ENCODE measurements at regions of chr17 and their contacts with region 1.

Region 1: DNA sequence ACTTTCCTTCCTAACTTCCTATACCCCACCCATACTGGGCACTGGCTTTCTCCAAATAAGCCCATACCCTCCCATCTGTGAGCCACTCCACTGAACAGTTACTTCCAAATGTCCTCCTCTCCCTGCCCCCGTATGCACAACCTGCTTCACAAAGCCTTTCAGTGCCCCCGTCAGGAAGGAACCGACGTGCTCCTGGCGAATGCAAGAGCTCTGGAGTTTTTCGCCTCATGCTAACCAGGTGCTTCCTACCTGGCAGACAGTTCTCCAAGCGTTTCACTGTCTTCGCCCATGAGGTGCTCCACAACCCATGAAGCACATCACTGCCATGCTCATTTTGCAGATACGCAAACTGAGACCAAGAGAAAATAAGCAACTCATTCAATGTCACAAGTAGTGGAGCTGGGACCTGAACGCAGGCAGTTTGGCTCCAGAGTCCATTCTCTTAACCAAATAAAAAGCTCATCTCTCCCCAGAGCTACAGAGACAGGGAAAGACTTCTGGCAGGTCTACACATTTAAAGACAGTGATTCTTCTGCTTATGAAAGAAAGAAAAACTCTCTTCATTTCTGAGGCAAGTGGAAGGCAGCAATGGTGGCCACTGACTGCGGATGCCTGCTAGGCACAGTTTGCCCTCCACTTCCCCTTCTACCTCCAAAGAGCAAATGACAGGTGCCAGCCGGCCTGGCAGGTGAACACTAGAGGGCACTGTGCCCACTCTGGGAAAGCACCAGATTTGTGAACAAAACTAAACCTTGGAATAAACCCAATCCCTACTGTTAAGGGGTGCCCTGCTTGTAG is 23.8 kb downstream of the SPHK1 start:
- DNase-seq: peak; percentile 81
- ATAC-seq: peak; percentile 81
- H3K4me3 Mint-ChIP-seq: no peak overlapping the region
- H3K27ac Mint-ChIP-seq: no peak overlapping the region
- H3K4me1 Mint-ChIP-seq: peaks cover 8% of the 10 kb centered on the region
- H3K27me3 Mint-ChIP-seq: no peaks in the 10 kb centered on the region
- CTCF ChIP-seq: peak; percentile 88

Region 2: DNA sequence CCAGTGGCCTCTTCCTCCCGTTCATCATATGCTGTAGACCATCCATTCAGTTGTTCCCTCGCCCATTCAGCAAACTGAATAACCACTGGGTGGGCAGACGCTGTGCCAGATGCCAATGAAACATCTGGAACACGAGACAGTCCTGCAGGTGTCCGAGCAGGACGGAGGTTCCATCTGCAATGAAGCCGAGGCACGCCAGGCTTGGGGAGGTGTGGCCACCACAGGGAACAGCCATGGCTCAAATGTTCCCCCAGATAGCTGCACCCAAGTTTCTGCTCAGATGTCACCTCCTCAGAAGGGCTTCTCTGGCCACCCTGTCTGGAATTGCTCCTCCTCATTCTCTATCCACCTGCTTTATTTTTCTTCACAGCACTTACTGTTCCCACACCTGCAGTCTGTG is 14.2 kb after region 1 on chr17:
- CTCF ChIA-PET with region 1: interaction called, 15 read pairs
- POLR2A ChIA-PET with region 1: no interaction called
- intact Hi-C with region 1: no loop called
- DNase-seq: no peak
- ATAC-seq: no peak
- H3K4me3 Mint-ChIP-seq: no peak overlapping the region
- H3K27ac Mint-ChIP-seq: no peak overlapping the region
- H3K4me1 Mint-ChIP-seq: peaks cover 13% of the 10 kb centered on the region
- H3K27me3 Mint-ChIP-seq: no peaks in the 10 kb centered on the region
- CTCF ChIP-seq: no peak

Region 3: DNA sequence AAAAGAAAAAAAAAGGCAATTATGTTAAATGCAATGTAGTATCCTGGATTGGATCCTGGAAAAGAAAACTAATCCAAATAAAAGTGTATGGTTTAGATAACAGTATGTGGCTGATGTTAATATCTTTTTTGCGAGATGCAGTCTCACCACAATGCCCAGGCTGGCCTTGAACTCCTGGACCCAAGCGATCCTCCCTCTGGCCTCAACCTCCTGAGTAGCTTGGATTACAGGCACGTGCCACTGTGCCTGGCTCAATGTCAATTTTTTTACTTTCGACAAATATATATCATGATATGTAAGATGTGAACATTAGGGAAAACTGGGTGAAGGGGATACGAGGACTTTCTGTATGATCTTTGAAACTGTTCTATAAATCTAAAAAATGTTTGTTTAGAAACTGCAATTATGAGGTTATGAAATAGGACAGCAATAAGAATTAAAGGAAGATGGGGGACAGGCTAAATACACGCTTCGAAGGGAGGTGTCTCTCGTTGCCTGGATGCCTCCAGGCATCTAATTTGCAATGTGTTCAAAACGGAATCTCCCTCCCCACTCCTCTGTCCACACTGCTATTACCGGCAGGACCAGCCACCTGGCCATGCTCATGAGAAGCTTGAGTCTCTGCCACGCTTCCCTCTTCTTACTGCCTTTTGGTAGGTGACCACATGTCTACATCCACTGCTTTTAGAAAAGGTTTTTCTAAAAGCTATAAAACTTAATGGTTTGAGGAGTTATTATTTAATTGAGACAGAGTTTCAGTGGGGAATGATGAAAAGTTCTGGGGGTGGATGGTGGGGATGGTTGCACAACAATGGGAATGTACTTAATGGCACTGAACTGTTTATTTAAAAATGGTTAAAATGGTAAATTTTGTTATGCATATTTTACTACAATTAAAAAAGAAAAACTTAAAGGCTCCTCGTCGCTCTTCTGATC is 29.5 kb after region 1 on chr17:
- CTCF ChIA-PET with region 1: interaction called, 12 read pairs
- POLR2A ChIA-PET with region 1: no interaction called
- intact Hi-C with region 1: no loop called
- DNase-seq: no peak
- ATAC-seq: no peak
- H3K4me3 Mint-ChIP-seq: no peak overlapping the region
- H3K27ac Mint-ChIP-seq: no peak overlapping the region
- H3K4me1 Mint-ChIP-seq: peaks cover 28% of the 10 kb centered on the region
- H3K27me3 Mint-ChIP-seq: no peaks in the 10 kb centered on the region
- CTCF ChIP-seq: no peak

Region 4: GRCh38 chr17:76458580-76459490 is 50.6 kb after region 1 on chr17:
- CTCF ChIA-PET with region 1: interaction called, 11 read pairs
- POLR2A ChIA-PET with region 1: no interaction called
- intact Hi-C with region 1: no loop called
- DNase-seq: peak; percentile 31
- ATAC-seq: no peak
- H3K4me3 Mint-ChIP-seq: no peak overlapping the region
- H3K27ac Mint-ChIP-seq: no peak overlapping the region
- H3K4me1 Mint-ChIP-seq: no peaks in the 10 kb centered on the region
- H3K27me3 Mint-ChIP-seq: no peaks in the 10 kb centered on the region
- CTCF ChIP-seq: no peak

Measured in activated CD8-positive, alpha-beta T cell treated with anti-CD3 and anti-CD28 coated beads for 36 hours (primary cell).